ENCODE measurements at regions of chr13 and their contacts with region 1.

Region 1: DNA sequence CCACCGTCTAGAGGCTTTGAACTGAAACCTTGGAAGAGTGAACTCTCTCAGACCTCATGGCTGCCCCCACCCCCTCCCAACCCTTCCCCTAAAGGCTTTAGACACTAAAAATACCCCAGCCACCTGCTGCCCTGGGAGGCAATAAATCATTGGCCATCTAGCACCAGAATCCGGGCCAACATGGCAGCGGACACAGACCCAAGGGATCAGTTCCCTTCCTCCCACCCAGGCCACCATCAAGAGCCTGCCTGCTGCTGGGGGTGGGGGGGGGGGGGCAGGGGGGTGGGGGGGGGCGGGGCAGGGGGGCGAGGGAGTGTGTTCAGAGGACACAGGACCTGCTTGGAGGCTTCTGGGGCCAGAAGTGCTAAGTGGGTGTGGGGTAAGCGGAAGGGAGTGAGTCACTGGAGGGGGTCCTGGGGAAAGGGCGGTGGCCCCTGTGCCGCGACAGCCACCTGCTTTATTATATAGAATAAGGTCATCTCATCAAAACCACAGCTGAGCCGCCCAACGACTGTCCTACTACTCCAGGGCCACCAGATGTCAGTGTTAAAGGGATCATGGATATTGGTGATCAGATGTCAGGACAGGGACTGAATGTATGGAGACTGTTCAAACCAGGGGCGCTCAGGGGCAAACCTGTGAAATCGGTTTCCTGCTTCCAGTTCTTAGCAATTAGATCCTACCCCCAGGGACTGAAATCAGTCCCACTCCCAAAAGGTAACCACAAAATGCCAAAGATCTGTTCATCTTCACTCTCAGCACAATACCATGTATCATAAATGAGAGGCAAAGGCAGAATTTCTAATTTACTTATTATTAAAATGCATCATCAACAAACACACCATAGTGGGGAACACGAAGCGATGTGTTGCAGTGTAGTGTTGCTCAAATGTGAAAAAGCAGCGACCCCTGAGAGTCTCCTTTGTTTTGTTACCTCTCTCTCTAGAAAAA is 24.3 kb downstream of the ARL11 start:
- DNase-seq: no peak
- ATAC-seq: peak; percentile 55
- H3K4me3 ChIP-seq: no peak overlapping the region
- H3K27ac ChIP-seq: no peak overlapping the region
- H3K4me1 ChIP-seq: no peaks in the 10 kb centered on the region
- H3K27me3 ChIP-seq: no peaks in the 10 kb centered on the region

Region 2: GRCh38 chr13:49840266-49840665 is 187.6 kb after region 1 on chr13:
- intact Hi-C with region 1: loop called in 1 of 2 experiments (anchors 5 kb)
- DNase-seq: no peak
- ATAC-seq: no peak
- H3K4me3 ChIP-seq: no peak overlapping the region
- H3K27ac ChIP-seq: no peak overlapping the region
- H3K4me1 ChIP-seq: no peaks in the 10 kb centered on the region
- H3K27me3 ChIP-seq: no peaks in the 10 kb centered on the region

Region 3: GRCh38 chr13:50123862-50124536 is 471.4 kb after region 1 on chr13:
- intact Hi-C with region 1: no loop called
- DNase-seq: peak; percentile 93 to 99
- ATAC-seq: peak; percentile 92
- H3K4me3 ChIP-seq: peak overlapping the region; percentile 48 to 65
- H3K27ac ChIP-seq: peak overlapping the region; percentile 94 to 99
- H3K4me1 ChIP-seq: no peaks in the 10 kb centered on the region
- H3K27me3 ChIP-seq: no peaks in the 10 kb centered on the region

Measured in aorta (tissue), 5 donors.